WTC11 (cell line): ENCODE measurements at regions of chr7 and their contacts with region 1.

Region 1: DNA sequence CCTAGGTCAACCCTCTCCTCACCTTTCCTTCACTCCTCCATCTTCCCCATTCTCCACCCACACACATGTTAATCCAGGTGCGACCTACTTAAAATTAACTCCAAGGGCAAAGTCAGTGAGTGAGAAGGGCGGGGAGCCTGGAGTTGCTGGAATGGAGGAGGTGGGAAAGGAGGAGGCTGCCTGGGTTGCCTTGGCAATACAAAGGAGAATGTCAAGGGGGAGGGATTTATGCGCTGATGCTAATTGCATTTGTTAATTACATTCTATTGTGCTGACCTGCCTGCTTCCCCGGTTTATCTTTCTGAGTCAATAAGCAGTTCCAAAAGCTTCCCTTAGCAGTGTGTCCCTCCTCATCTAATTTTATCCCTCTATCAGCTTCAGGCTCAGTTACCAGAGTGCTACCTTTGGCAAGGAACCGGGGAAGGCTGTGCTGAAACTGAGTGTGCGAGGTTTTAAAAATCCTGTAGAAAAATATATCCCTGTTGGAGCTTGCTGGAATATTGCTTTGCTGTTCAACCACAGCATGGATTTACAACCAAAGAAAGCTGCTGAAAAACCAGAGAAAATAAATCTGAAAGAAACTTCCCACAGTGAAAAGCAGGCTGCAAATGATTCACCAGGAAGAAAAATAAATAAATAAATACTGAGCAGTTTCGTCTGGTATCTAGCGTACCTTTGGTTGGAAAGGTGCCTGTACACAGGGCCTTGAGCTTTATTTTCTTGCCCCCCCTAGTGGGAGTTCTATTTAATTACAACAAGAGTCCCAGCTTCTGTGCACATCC is 113.2 kb upstream of the DGKB start:
- DNase-seq: peak; percentile 73
- ATAC-seq: peak; percentile 90
- H3K4me3 Mint-ChIP-seq: peak overlapping the region; percentile 67
- H3K27ac Mint-ChIP-seq: peak overlapping the region; percentile 98
- H3K4me1 Mint-ChIP-seq: peaks cover 37% of the 10 kb centered on the region
- H3K27me3 Mint-ChIP-seq: no peaks in the 10 kb centered on the region
- CTCF ChIP-seq: peak; percentile 57

Region 2: DNA sequence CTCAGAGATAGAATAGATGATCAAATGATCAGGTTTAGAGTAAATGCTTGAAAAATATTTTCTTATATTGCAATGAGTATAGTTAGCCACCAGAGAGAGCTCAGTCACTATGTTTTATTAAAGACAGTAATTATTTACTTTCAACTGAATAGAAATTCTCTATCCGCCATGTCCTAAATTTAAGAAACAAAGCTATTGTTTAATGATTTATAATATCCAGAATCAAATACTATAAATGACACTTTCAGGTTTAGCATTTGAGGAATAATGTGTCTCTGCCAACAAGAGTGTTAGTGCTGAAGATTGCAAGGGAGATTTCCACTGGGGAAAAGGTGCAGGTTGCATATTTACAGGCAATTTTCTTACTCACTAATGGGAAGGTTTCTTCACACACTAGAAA is 297.9 kb before region 1 on chr7:
- CTCF ChIA-PET with region 1: interaction called, 29 read pairs
- POLR2A ChIA-PET with region 1: no interaction called
- DNase-seq: no peak
- ATAC-seq: peak; percentile 46; the same call in 1 of the 2 replicates
- H3K4me3 Mint-ChIP-seq: no peak overlapping the region
- H3K27ac Mint-ChIP-seq: no peak overlapping the region
- H3K4me1 Mint-ChIP-seq: peaks cover 47% of the 10 kb centered on the region
- H3K27me3 Mint-ChIP-seq: no peaks in the 10 kb centered on the region
- CTCF ChIP-seq: no peak

Region 3: DNA sequence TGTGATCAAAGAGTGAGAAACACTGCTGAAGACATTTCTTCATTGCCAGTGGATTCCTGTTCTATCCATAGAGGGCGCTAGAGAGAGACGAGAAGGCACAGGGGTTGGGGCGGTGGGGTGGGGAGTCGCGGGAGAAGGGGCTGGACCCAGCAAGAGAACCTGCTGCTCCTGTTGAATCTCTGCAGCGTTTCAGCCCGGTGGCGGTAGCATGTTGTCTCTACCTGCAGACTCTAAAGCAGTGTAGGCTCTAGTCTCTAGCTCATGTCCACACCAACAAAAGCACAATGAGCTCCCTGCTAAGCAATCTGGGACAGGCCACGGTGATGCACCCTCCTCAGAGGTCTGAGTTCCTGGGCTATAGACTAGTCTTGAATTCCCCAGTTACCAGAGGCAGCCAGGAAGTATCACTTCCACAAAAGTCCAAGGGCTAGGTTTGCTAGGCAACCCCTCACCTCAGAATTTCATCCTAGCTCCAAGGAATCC is 280.9 kb before region 1 on chr7:
- CTCF ChIA-PET with region 1: interaction called, 11 read pairs
- POLR2A ChIA-PET with region 1: no interaction called
- DNase-seq: peak; percentile 71
- ATAC-seq: peak; percentile 98
- H3K4me3 Mint-ChIP-seq: peak overlapping the region; percentile 45
- H3K27ac Mint-ChIP-seq: peak overlapping the region; percentile 23; the same call in 1 of the 2 replicates
- H3K4me1 Mint-ChIP-seq: peaks cover 17% of the 10 kb centered on the region
- H3K27me3 Mint-ChIP-seq: no peaks in the 10 kb centered on the region; the same call in 1 of the 2 replicates
- CTCF ChIP-seq: peak; percentile 73

Region 4: DNA sequence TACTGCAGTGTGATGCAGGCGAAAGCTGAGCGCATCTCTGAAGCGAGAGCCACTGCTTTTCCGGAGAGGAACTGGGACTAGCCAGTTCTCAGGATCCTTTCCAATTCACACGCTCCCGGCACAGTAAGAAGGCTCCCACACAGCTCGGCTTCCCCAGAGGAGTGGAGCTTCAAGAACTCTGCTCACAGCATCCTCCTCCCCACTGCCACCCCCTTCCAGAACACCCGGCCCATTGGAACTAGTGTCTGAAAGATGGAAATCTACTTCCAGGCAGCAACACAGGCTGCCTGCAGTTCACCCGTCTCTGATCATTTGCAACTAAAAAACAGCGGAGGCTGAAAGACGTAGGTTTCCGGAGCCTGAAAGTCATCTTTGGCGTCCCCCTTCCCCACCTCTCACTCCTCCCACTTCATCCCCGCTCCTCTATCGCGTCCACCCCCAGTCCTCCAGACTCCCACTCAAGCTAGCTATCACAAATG is 113.1 kb before region 1 on chr7 and contains the start of gene DGKB:
- CTCF ChIA-PET with region 1: interaction called, 14 read pairs
- POLR2A ChIA-PET with region 1: interaction called, 3 read pairs
- DNase-seq: peak; percentile 25
- ATAC-seq: peak; percentile 76
- H3K4me3 Mint-ChIP-seq: no peak within 1 kb of the TSS
- H3K27ac Mint-ChIP-seq: no peak within 1 kb of the TSS
- H3K4me1 Mint-ChIP-seq: peaks cover 19% of the 10 kb centered on the region
- H3K27me3 Mint-ChIP-seq: no peaks in the 10 kb centered on the region
- CTCF ChIP-seq: no peak
- total RNA-seq, gene DGKB: 1.9 to 3.5 TPM (median 3.0 TPM) in 3 replicates